ENCODE measurements at regions of chr1 and their contacts with region 1.

Region 1: GRCh38 chr1:100866041-100866900 is 28.4 kb downstream of the EXTL2 start:
- DNase-seq: no peak
- H3K4me3 Mint-ChIP-seq: no peak overlapping the region
- H3K27ac Mint-ChIP-seq: no peak overlapping the region
- H3K4me1 Mint-ChIP-seq: peaks cover 3% of the 10 kb centered on the region
- H3K27me3 Mint-ChIP-seq: no peaks in the 10 kb centered on the region

Region 2: DNA sequence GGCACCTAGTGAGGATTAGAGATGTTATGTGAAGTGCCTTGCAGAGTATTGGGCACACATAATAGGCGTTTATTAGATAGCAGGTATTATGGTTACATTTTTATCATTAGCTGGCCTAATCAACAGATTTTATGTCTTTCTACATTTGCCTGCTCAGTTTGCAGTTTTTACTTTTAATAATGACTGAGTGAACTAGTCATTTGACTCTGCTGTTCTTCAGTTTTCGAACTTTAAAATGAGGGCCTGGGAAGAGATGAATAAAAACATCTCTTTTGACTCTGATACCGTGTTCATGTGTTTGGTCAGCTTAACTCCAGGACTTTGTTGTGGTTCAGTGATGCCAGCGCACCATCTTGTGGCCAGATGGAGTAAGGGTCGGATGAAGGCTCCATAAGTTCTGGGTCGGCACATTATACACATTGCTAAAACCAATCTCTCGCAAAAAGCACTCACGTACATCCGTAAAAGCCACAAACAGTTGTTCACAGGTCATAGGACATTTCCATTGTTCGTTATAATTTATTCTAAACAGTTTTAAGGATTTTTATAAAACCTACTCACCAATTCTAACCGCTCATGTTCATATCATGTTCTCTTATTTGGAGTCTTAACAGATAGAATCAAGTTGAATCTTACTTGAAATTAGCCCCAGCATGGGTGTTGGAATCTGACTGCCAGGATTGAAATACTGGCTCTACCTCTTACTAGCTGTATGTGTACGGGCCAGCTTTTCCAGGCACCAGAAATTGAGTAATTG is 406.7 kb before region 1 on chr1:
- CTCF ChIA-PET with region 1: interaction called, 29 read pairs
- POLR2A ChIA-PET with region 1: no interaction called
- DNase-seq: peak; percentile 78
- H3K4me3 Mint-ChIP-seq: no peak overlapping the region
- H3K27ac Mint-ChIP-seq: peak overlapping the region; percentile 25
- H3K4me1 Mint-ChIP-seq: peaks cover 51% of the 10 kb centered on the region
- H3K27me3 Mint-ChIP-seq: no peaks in the 10 kb centered on the region

Region 3: GRCh38 chr1:100530880-100531487 is 335.3 kb before region 1 on chr1:
- CTCF ChIA-PET with region 1: no interaction called
- POLR2A ChIA-PET with region 1: no interaction called
- DNase-seq: peak; percentile 47
- H3K4me3 Mint-ChIP-seq: no peak overlapping the region
- H3K27ac Mint-ChIP-seq: peak overlapping the region; percentile 21
- H3K4me1 Mint-ChIP-seq: peaks cover 33% of the 10 kb centered on the region
- H3K27me3 Mint-ChIP-seq: peaks cover 12% of the 10 kb centered on the region

Region 4: GRCh38 chr1:101178688-101179491 is 312.6 kb after region 1 on chr1:
- CTCF ChIA-PET with region 1: no interaction called
- POLR2A ChIA-PET with region 1: no interaction called
- DNase-seq: no peak
- H3K4me3 Mint-ChIP-seq: peak overlapping the region; percentile 69
- H3K27ac Mint-ChIP-seq: peak overlapping the region; percentile 97
- H3K4me1 Mint-ChIP-seq: peaks cover 69% of the 10 kb centered on the region
- H3K27me3 Mint-ChIP-seq: no peaks in the 10 kb centered on the region